Right lobe of liver (tissue), 6 donors: ENCODE measurements at regions of chr1 and their contacts with region 1.

Region 1: GRCh38 chr1:161486806-161487741 is 18.2 kb upstream of the FCGR2A start:
- DNase-seq: no peak
- ATAC-seq: peak; percentile 73 to 88 (median 82)
- H3K4me3 ChIP-seq: no peak overlapping the region
- H3K27ac ChIP-seq: no peak overlapping the region
- H3K4me1 ChIP-seq: no peaks in the 10 kb centered on the region
- H3K27me3 ChIP-seq: no peaks in the 10 kb centered on the region
- CTCF ChIP-seq: peak; percentile 71 to 84 (median 80)
- POLR2A ChIP-seq: no peak

Region 2: GRCh38 chr1:161749509-161750407 is 262.7 kb after region 1 on chr1 and contains the start of gene DUSP12:
- intact Hi-C with region 1: loop called in 1 of 2 experiments (anchors 10 kb)
- DNase-seq: peak; percentile 92 to 94 (median 93)
- ATAC-seq: peak; percentile 99
- H3K4me3 ChIP-seq: peak within 1 kb of the TSS; percentile 70 to 98 (median 92)
- H3K27ac ChIP-seq: peak within 1 kb of the TSS; percentile 63 to 77 (median 73)
- H3K4me1 ChIP-seq: peaks cover 0 to 8% (median 5%) of the 10 kb centered on the region in 4 donors
- H3K27me3 ChIP-seq: no peaks in the 10 kb centered on the region
- CTCF ChIP-seq: peak in 2 of 4 donors; percentile 3 to 35
- POLR2A ChIP-seq: peak; percentile 58
- total RNA-seq, gene DUSP12: 4.0 to 7.1 (median 4.7) TPM